ENCODE measurements at regions of chr14 and their contacts with region 1.

Region 1: DNA sequence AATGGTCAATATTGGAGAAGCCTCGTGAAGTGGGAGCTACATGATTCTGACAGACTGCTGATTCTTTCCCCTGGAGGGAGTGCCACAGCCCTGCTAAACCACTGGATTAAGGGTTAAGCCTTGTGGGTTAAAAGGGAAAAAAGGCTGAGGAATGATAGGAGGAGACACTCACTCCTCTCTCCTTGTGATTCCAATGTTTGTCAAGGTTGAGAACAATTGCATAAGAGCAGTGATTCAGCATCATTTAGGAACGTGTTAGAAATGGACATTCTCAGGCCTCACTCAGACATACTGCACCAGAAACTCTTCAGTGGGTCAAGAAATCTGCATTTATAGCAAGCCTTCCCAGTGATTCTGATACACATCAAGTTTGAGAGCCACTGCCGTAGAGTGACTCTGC is 87.8 kb upstream of the GZMB start:
- DNase-seq: peak; percentile 14
- H3K4me3 ChIP-seq: no peak overlapping the region
- H3K27ac ChIP-seq: no peak overlapping the region
- H3K4me1 ChIP-seq: no peaks in the 10 kb centered on the region
- H3K27me3 ChIP-seq: 0 out of 2 replicates have a peak, but pooled peaks cover 15% of the 10 kb centered on the region

Region 2: GRCh38 chr14:24425704-24426103 is 296.1 kb before region 1 on chr14:
- in situ Hi-C with region 1: no loop called
- DNase-seq: peak; percentile 93
- H3K4me3 ChIP-seq: no peak overlapping the region
- H3K27ac ChIP-seq: peak overlapping the region; percentile 78
- H3K4me1 ChIP-seq: peaks cover 24% of the 10 kb centered on the region
- H3K27me3 ChIP-seq: no peaks in the 10 kb centered on the region

Region 3: DNA sequence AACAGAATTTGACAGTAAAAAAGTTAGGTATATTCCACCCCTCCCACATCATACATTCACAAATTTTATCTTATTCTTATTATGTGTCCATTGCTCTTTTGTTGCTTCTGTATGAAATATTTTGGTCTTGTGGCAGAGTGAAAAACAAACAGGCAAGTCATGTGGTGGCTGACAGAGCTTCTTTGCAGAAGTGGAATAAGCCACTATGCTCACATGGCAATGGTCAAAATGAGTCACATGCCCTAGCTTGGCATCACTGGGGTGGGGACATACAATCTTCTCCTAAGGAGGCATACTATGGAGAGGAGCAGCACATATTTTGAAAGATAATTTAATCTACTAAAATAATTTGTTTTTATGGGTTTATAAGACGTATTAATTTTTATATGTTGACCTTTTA is 186.0 kb before region 1 on chr14:
- in situ Hi-C with region 1: no loop called
- DNase-seq: no peak
- H3K4me3 ChIP-seq: no peak overlapping the region
- H3K27ac ChIP-seq: no peak overlapping the region
- H3K4me1 ChIP-seq: no peaks in the 10 kb centered on the region
- H3K27me3 ChIP-seq: no peaks in the 10 kb centered on the region

Region 4: DNA sequence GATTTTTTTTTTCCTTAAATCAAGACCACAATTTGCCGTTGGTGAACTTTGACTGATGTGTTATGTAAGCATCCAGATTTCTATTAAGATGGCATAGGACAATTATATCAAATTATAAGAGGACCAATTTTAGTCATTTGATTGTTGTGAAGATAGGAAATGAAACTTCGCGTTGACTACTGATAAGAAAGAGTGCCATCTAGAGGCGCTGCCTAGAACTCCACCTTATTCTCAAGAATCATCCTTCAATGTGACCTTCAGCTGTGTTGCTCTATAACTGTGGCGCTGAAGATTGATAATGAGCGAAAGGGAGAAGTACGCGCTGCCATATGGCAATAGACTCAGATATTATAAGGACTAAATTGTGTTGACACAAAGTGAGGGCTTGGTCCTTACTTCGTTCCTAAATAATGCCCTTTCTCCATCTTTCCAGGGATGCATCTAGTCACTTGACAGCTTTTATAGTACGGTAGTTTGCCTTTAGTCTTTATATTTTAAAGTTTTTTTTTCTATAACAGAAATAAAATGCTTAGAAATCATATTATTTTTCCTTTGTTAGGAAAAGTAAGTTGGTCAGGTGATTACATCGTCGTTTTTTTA is 678.9 kb after region 1 on chr14:
- in situ Hi-C with region 1: loop called (anchors 10 kb)
- DNase-seq: peak; percentile 63
- H3K4me3 ChIP-seq: no peak overlapping the region
- H3K27ac ChIP-seq: no peak overlapping the region
- H3K4me1 ChIP-seq: no peaks in the 10 kb centered on the region
- H3K27me3 ChIP-seq: peaks cover 15% of the 10 kb centered on the region; the same call in 1 of the 2 replicates